Activated T-helper 1 cell treated with anti-CD3 and anti-CD28 coated beads, Interleukin-12 subunit alpha, Interleukin-12 subunit beta, Interleukin-2, Interleukin-4 antibody, amounts not matched to agents 30 ng/mL and 10 ng/mL and 1 ng/mL, durations not matched to agents 14 hours and 24 hours and 36 hours (primary cell): ENCODE measurements at regions of chr19 and their contacts with region 1.

Region 1: GRCh38 chr19:11597202-11598102 is at the start of gene ZNF627:
- DNase-seq: peak; percentile 96
- H3K4me3 Mint-ChIP-seq: peak within 1 kb of the TSS; percentile 93
- H3K27ac Mint-ChIP-seq: peak within 1 kb of the TSS; percentile 89
- H3K4me1 Mint-ChIP-seq: peaks cover 10% of the 10 kb centered on the region
- H3K27me3 Mint-ChIP-seq: no peaks in the 10 kb centered on the region
- total RNA-seq, gene ZNF627: 4.3 and 5.2 TPM in 2 replicates

Region 2: GRCh38 chr19:11528551-11529341 is 68.7 kb before region 1 on chr19 and contains the start of gene ECSIT:
- intact Hi-C with region 1: loop called (anchors 2 kb)
- DNase-seq: peak; percentile 89
- H3K4me3 Mint-ChIP-seq: peak within 1 kb of the TSS; percentile 95
- H3K27ac Mint-ChIP-seq: peak within 1 kb of the TSS; percentile 92
- H3K4me1 Mint-ChIP-seq: peaks cover 28% of the 10 kb centered on the region
- H3K27me3 Mint-ChIP-seq: no peaks in the 10 kb centered on the region
- total RNA-seq, gene ECSIT: 37.3 and 38.8 TPM in 2 replicates

Region 3: GRCh38 chr19:11639602-11640471 is 42.4 kb after region 1 on chr19:
- intact Hi-C with region 1: loop called (anchors 1 kb)
- DNase-seq: peak; percentile 78
- H3K4me3 Mint-ChIP-seq: peak overlapping the region; percentile 77
- H3K27ac Mint-ChIP-seq: no peak overlapping the region
- H3K4me1 Mint-ChIP-seq: no peaks in the 10 kb centered on the region
- H3K27me3 Mint-ChIP-seq: no peaks in the 10 kb centered on the region

Region 4: GRCh38 chr19:11766597-11767591 is 169.4 kb after region 1 on chr19 and contains the start of gene ZNF441:
- intact Hi-C with region 1: loop called (anchors 1 kb)
- DNase-seq: peak; percentile 87
- H3K4me3 Mint-ChIP-seq: peak within 1 kb of the TSS; percentile 95
- H3K27ac Mint-ChIP-seq: peak within 1 kb of the TSS; percentile 95
- H3K4me1 Mint-ChIP-seq: peaks cover 11% of the 10 kb centered on the region
- H3K27me3 Mint-ChIP-seq: no peaks in the 10 kb centered on the region
- total RNA-seq, gene ZNF441: 2.8 and 4.4 TPM in 2 replicates